ENCODE measurements at regions of chr2 and their contacts with region 1.

Region 1: GRCh38 chr2:86584151-86584913 is 21.1 kb upstream of the CHMP3 start:
- DNase-seq: peak; percentile 31
- H3K4me3 Mint-ChIP-seq: no peak overlapping the region
- H3K27ac Mint-ChIP-seq: peak overlapping the region; percentile 89
- H3K4me1 Mint-ChIP-seq: peaks cover 23% of the 10 kb centered on the region
- H3K27me3 Mint-ChIP-seq: peaks cover 4% of the 10 kb centered on the region

Region 2: GRCh38 chr2:86623651-86624541 is 39.6 kb after region 1 on chr2 and contains the start of gene RNF103:
- CTCF ChIA-PET with region 1: interaction called, 4 read pairs
- POLR2A ChIA-PET with region 1: interaction called, 30 read pairs
- DNase-seq: peak; percentile 91
- H3K4me3 Mint-ChIP-seq: peak within 1 kb of the TSS; percentile 90
- H3K27ac Mint-ChIP-seq: peak within 1 kb of the TSS; percentile 95
- H3K4me1 Mint-ChIP-seq: peaks cover 19% of the 10 kb centered on the region
- H3K27me3 Mint-ChIP-seq: peaks cover 23% of the 10 kb centered on the region
- total RNA-seq, gene RNF103: 18.9 to 19.9 TPM